ENCODE measurements at regions of chr12 and their contacts with region 1.

Region 1: GRCh38 chr12:93569656-93570551 is 2.6 kb upstream of the SOCS2 start:
- DNase-seq: peak; percentile 95

Region 2: GRCh38 chr12:93502802-93503623 is 66.9 kb before region 1 on chr12:
- intact Hi-C with region 1: loop called in 1 of 2 experiments (anchors 5 kb)
- DNase-seq: no peak

Region 3: DNA sequence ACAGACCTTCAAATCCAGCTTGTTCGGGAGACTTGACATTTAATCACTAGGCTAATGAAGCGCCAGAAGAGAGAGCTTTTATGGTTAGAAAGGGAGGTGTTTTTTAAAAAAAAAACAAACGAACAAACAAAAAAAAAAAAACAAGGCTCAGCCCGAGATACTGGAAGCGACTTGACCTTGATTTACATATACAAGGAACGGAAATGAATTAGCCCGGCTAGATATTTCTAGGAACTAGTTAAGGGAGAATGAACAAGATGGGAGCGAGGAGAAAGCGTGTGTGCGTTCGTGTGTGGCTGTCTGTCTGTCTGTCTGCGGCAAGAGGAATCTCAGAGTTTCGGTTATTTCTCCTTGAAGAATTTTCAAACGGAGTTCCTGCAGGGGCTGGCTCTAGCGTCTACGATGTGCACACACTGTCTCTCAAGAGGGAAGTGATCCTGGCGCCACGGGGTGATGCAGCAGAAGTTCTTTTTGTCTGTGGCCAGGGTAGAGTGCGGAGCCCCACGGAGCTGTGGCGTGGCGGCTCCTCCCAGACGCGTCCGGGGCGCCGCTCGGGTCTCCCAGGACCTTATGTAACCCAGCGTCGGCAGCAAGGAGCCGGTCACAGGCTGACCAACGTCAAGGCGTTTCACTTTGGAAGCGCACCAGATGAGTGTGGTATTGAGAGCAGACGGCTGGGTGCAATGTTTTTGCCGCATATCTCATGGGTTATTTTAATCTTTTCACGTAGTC is 21.4 kb after region 1 on chr12:
- intact Hi-C with region 1: loop called in 1 of 2 experiments (anchors 2 kb)
- DNase-seq: peak; percentile 95

Region 4: DNA sequence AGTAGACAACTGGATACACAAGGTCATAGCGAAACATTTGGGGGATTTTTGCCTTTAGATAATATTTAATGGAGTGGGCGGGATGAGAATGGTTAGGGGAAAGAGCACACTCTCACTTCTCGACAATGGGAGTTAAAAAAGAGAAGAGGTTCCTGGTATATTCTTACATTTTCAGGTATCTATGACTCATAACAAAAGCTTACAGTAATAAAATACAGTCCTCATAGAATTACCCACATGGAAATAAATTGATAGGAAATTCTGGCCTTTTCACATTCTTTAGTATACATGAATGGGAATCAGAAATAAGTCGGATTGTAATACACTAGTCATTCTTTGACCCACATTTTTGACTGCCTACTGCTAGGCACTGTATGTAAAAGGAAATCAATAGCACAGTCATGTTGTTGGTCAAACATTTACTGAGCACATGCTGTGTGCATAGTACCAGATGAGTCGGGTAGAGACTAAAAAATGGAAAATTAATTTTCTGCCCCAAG is 99.1 kb after region 1 on chr12:
- intact Hi-C with region 1: no loop called
- DNase-seq: no peak

Region 5: DNA sequence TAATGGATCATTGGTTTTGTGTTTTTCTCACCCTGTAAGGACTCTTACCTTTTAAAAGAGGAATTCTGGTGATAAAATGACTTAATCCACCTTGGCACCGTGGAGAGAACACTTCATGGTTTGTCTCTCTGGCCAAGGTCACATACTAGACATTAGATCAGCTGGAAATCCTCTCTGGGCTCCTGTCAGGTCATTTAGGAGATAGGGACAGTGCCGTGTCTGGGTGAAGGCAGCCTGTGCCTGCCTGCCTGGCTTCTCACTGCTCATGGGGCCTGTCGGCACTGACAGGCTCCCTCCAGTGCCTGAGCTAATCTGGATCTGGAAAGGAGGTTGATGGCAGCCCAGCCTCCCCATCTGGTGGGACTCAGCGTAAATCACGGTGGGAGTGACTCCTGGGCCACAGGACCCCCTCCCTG is 113.0 kb after region 1 on chr12:
- intact Hi-C with region 1: loop called in 1 of 2 experiments (anchors 10 kb)
- DNase-seq: no peak

Region 6: GRCh38 chr12:93742110-93742934 is 172.4 kb after region 1 on chr12:
- intact Hi-C with region 1: loop called in 1 of 2 experiments (anchors 10 kb)
- DNase-seq: peak; percentile 91

Region 7: DNA sequence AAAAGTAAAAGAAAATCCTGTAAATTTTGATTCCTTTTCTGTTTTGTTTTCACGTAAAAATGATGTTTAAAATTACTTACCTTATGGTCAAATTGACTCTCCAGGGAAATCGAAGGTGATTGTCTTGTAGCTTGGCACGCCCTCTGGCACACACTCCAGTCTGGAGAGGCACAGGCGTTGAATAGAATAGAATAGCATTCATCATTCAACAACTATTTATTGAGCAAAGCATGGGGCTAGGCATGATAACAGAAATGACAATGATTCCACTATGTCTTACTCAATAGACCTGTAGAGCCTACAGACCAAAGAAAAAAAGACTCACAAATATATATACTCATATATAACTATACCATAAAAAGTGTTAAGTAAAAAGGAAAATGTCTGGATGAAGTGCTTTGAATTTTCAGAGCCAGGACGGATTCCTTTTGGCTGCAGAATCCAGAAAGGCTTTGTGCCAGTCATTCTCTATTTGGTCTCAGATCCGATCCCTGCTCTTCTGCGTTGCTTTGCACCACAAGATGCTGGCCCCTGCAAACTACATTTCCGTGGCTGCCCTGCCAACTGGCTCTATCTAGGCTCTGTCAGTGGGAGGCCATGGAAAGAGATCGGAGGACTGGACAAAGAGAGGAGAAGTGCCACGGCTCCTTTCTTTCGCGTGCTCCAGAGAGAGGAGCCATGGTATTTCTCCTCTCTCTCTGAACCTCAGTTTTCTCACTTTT is 339.1 kb after region 1 on chr12:
- intact Hi-C with region 1: loop called in 1 of 2 experiments (anchors 10 kb)
- DNase-seq: no peak

Region 8: GRCh38 chr12:94101738-94102660 is 532.1 kb after region 1 on chr12:
- intact Hi-C with region 1: loop called in 1 of 2 experiments (anchors 5 kb)
- DNase-seq: peak; percentile 95

Measured in posterior vena cava (tissue), 2 donors.